ENCODE measurements at regions of chr3 and their contacts with region 1.

Region 1: GRCh38 chr3:33030802-33031201 is 66.1 kb downstream of the GLB1 start:
- DNase-seq: peak; percentile 80
- ATAC-seq: peak; percentile 97
- H3K4me3 Mint-ChIP-seq: peak overlapping the region; percentile 1
- H3K27ac Mint-ChIP-seq: peak overlapping the region; percentile 28
- H3K4me1 Mint-ChIP-seq: peaks cover 27% of the 10 kb centered on the region
- H3K27me3 Mint-ChIP-seq: peaks cover 3% of the 10 kb centered on the region

Region 2: DNA sequence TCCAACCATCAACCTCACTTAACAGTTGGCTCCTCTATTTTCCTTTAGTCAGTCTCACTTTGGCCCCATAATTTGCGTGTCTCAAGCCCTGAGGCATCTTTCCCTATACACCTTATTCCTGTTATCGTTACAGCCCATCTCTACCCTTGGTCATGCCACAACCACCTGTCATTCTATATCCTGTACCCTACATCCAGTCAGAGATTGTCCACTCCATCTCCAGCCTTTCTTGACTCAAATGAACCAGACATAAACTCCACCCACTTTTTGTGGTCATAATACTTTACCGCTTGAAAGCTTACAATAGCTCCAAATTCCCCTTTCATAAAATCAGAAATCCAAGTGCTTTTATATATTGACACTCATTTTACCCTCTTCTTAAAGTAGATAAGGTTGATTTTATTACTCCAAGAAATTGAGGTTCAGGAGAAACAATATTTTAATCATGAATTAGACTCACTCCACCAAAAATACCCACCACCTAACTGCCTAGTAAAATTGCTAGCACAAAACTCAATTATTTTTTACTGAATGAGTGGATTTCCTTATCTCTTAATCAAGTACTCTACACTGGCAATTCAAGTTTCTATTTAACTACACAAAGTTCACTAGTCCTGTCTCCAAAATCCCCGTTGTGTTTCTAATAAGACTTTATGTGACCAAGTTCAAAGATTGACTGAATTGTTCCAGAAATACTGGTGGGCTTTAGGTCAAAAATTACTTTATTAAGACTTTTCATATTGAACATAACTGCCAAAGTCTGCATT is 70.2 kb before region 1 on chr3:
- CTCF ChIA-PET with region 1: interaction called, 10 read pairs
- POLR2A ChIA-PET with region 1: interaction called, 3 read pairs
- DNase-seq: no peak
- ATAC-seq: peak; percentile 32
- H3K4me3 Mint-ChIP-seq: no peak overlapping the region
- H3K27ac Mint-ChIP-seq: peak overlapping the region; percentile 12
- H3K4me1 Mint-ChIP-seq: peaks cover 36% of the 10 kb centered on the region
- H3K27me3 Mint-ChIP-seq: no peaks in the 10 kb centered on the region

Region 3: DNA sequence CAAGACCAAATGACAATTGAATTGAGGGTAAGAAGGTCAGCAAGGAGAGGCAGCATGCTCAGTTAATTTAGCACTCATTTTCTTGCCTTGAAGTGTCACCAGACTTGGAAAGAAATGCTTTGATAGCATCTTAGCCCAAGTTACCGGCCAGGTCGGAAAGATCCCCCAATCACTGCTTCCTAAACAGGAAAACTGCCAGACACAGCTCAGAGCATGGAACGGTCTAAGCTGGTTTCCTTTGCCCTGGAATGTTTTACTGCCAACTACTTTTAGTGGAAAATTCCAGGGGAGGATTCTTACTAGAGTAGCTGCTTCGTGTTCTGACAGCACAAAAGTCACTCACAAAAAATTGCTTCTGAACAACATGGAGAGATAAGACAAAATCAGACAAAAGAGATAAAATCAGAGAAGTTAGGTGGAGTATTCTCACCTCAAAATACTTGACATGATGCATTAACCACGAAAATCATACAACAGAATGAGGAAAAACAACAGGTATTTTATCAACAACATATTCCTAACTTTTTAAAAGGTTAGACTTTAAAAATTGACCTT is 13.9 kb before region 1 on chr3:
- CTCF ChIA-PET with region 1: interaction called, 28 read pairs
- POLR2A ChIA-PET with region 1: no interaction called
- DNase-seq: no peak
- ATAC-seq: no peak
- H3K4me3 Mint-ChIP-seq: no peak overlapping the region
- H3K27ac Mint-ChIP-seq: no peak overlapping the region
- H3K4me1 Mint-ChIP-seq: peaks cover 11% of the 10 kb centered on the region
- H3K27me3 Mint-ChIP-seq: no peaks in the 10 kb centered on the region

Region 4: DNA sequence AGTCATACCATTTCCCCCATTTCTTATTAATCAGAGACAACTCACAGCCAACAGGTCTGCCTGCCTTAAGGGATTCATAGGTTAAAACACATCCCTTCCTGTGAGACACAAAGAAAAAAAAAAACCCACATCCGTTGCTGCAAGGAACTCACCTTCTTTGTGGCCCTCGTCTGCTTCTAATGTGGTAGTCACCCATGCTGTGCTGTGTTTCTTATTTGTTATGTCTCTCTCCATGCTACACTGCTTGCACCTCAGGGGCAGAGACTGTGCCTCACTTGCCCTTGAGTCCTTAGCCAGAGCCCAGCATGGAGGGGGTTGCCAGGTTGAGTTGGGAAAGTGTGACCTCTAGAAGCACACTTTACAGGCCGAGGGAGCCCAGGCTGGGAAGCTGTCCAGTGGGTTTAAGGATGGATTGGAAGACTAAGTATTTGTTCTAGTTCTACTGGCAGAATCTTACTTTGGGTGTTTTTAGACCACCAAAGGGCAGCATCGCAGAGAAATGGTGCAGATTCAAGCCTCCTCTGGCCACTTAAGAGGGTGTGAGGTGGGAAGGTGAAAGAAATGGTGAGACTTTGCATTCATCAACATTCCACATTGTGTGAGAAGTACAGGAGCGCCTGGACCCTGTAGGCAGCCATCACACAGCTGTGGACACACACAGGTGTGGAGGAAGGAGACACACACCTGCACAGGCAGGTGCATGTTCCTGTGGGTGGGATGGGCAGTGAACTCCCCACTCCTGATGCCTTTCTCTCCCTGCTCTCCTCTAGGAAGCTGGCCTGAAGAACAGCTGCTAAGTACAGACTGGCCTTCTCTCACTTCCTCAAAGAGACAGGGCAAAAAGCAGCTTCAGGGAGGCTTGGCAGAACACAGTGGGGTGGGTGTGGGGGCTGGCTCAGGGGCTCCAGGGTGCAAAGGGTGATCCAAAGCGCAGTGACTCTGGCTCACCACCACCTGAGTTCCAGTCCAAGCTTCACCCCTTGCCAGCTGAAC is 17.3 kb after region 1 on chr3:
- CTCF ChIA-PET with region 1: interaction called, 83 read pairs
- POLR2A ChIA-PET with region 1: interaction called, 4 read pairs
- DNase-seq: peak; percentile 80
- ATAC-seq: peak; percentile 88
- H3K4me3 Mint-ChIP-seq: peak overlapping the region; percentile 74
- H3K27ac Mint-ChIP-seq: peak overlapping the region; percentile 96
- H3K4me1 Mint-ChIP-seq: peaks cover 76% of the 10 kb centered on the region
- H3K27me3 Mint-ChIP-seq: no peaks in the 10 kb centered on the region

Region 5: GRCh38 chr3:33096093-33096868 is 65.5 kb after region 1 on chr3:
- CTCF ChIA-PET with region 1: interaction called, 12 read pairs
- POLR2A ChIA-PET with region 1: no interaction called
- DNase-seq: peak; percentile 59
- ATAC-seq: peak; percentile 59
- H3K4me3 Mint-ChIP-seq: peak overlapping the region; percentile 96
- H3K27ac Mint-ChIP-seq: peak overlapping the region; percentile 88
- H3K4me1 Mint-ChIP-seq: peaks cover 40% of the 10 kb centered on the region
- H3K27me3 Mint-ChIP-seq: peaks cover 6% of the 10 kb centered on the region

Measured in activated CD8-positive, alpha-beta T cell treated with anti-CD3 and anti-CD28 coated beads, Interleukin-2, amount 10 ng/mL, durations not matched to agents 7 days and 5 days (primary cell).